PC-9 (cell line): ENCODE measurements at regions of chr2 and their contacts with region 1.

Region 1: DNA sequence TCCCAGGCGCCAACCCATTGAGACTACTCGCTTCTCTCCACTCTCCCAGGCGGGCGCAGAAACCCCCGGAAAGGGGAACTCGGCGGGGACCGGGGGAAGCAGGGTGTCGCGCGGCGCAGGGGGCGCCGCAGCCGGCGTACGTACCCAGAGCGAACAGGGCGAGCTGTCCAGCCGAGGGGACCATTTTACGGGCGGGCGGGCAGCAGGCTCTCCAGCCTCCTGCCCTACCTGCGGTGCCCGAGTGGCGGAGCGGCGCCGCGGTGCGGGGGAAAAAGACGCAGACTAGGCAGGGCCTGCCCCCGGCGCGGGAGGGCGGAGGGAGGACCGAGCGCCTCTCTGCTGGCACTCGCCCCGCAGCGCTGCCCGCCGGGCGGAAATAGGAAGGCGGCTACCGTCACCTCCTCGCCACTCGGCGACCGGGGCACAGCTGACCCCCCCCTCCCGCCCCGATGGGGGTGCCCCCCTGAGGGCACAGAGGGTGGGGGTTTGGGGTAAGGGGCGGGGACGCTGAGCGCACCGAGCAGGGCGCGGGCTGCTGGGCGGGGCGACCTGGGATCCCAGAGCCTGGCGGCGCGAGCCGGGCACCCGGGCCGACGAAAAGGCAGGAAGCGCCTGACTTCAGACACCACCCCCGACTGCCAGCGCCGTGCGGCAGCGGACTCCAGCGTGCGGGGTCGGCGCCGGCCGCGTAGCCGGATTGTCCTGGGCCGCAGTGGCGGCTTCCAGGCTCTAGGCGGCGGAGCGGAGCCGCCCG is at the start of gene TGFA:
- DNase-seq: peak; percentile 83 to 98
- H3K4me3 ChIP-seq: peak within 1 kb of the TSS; percentile 99
- H3K27ac ChIP-seq: peak within 1 kb of the TSS; percentile 98
- H3K4me1 ChIP-seq: peaks cover 50% of the 10 kb centered on the region
- H3K27me3 ChIP-seq: no peaks in the 10 kb centered on the region
- CTCF ChIP-seq: peak; percentile 86
- total RNA-seq, gene TGFA: 27.7 and 36.4 TPM in 2 replicates

Region 2: DNA sequence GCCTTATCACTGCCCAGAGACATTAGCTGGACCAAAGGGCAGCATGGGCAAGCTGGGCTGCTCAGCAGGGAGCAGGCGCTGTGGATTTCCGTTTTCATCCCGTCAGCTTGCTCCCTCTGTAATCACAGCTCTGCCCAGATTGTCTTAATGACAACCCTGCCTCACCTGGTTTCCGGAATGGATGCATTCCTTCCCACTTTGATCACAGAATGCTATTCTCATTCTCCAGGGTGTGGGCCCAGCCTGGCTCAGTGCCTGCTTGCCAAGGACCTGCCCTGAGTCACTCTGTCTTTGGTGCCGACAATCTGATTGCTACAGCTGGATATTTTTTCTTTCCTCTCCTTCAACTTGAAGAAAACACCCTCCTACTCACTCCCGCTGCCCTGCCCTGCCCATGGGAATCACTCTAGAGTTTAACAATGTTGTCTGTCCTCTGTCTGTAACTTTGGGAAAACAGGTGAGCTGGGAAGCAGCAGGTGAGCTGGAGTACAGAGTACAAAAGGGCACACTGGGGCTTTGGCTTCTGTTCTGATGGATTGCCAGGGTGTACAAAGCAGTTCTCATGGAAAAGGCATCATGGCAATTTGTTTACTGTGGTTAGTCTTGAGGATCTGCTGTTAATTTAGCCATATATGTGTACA is 224.7 kb before region 1 on chr2:
- CTCF ChIA-PET with region 1: no interaction called
- POLR2A ChIA-PET with region 1: no interaction called
- intact Hi-C with region 1: loop called (anchors 1 kb)
- DNase-seq: peak; percentile 93 to 97
- H3K4me3 ChIP-seq: peak overlapping the region; percentile 8; the same call in 1 of the 2 replicates
- H3K27ac ChIP-seq: peak overlapping the region; percentile 81
- H3K4me1 ChIP-seq: peaks cover 29% of the 10 kb centered on the region
- H3K27me3 ChIP-seq: no peaks in the 10 kb centered on the region
- CTCF ChIP-seq: no peak

Region 3: GRCh38 chr2:70381831-70382267 is 171.9 kb before region 1 on chr2:
- CTCF ChIA-PET with region 1: no interaction called
- POLR2A ChIA-PET with region 1: no interaction called
- intact Hi-C with region 1: loop called (anchors 5 kb)
- DNase-seq: peak; percentile 85 to 97
- H3K4me3 ChIP-seq: peak overlapping the region; percentile 34; the same call in 1 of the 2 replicates
- H3K27ac ChIP-seq: peak overlapping the region; percentile 98
- H3K4me1 ChIP-seq: peaks cover 35% of the 10 kb centered on the region
- H3K27me3 ChIP-seq: no peaks in the 10 kb centered on the region
- CTCF ChIP-seq: no peak

Region 4: DNA sequence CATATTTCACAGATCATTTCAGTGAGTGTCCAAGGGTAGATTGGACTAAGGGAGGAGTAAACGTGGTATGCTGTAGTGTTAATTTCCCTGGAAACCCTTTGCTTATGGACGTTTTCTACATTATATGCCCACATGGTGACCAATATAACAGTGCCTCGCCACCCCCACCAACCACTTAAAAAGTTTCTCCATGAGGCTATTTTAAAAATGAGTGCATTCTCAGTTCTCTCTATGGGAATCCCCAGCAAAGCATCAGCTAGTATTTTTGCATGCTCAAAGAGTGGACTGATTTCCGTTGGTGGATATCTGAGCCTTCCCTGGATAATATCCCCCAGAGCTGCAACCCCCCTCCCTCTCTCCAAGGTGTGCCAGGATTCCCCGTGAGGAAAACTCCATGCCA is 73.3 kb before region 1 on chr2:
- CTCF ChIA-PET with region 1: interaction called, 4 read pairs
- POLR2A ChIA-PET with region 1: no interaction called
- intact Hi-C with region 1: loop called (anchors 1 kb)
- DNase-seq: no peak
- H3K4me3 ChIP-seq: no peak overlapping the region
- H3K27ac ChIP-seq: no peak overlapping the region
- H3K4me1 ChIP-seq: peaks cover 28% of the 10 kb centered on the region
- H3K27me3 ChIP-seq: no peaks in the 10 kb centered on the region
- CTCF ChIP-seq: no peak

Region 5: GRCh38 chr2:70509553-70509952 is 44.2 kb before region 1 on chr2:
- CTCF ChIA-PET with region 1: no interaction called
- POLR2A ChIA-PET with region 1: interaction called, 6 read pairs
- intact Hi-C with region 1: loop called (anchors 1 kb)
- DNase-seq: peak; percentile 74 to 96
- H3K4me3 ChIP-seq: peak overlapping the region; percentile 35; the same call in 1 of the 2 replicates
- H3K27ac ChIP-seq: peak overlapping the region; percentile 97
- H3K4me1 ChIP-seq: peaks cover 43% of the 10 kb centered on the region
- H3K27me3 ChIP-seq: no peaks in the 10 kb centered on the region
- CTCF ChIP-seq: no peak

Region 6: GRCh38 chr2:70616168-70616694 is 62.5 kb after region 1 on chr2:
- CTCF ChIA-PET with region 1: interaction called, 7 read pairs
- POLR2A ChIA-PET with region 1: interaction called, 4 read pairs
- intact Hi-C with region 1: loop called (anchors 1 kb)
- DNase-seq: peak; percentile 67 to 96
- H3K4me3 ChIP-seq: no peak overlapping the region
- H3K27ac ChIP-seq: peak overlapping the region; percentile 33; the same call in 1 of the 2 replicates
- H3K4me1 ChIP-seq: peaks cover 24% of the 10 kb centered on the region
- H3K27me3 ChIP-seq: no peaks in the 10 kb centered on the region
- CTCF ChIP-seq: no peak